ENCODE measurements at regions of chr6 and their contacts with region 1.

Region 1: GRCh38 chr6:139375232-139376016 is 976 bp upstream of the CITED2 start:
- DNase-seq: peak; percentile 98
- H3K4me3 ChIP-seq: peak overlapping the region; percentile 65 to 89 (median 86)
- H3K27ac ChIP-seq: peak overlapping the region; percentile 96 to 97 (median 97)
- H3K4me1 ChIP-seq: peaks cover 4 to 26% (median 12%) of the 10 kb centered on the region in 4 donors
- H3K27me3 ChIP-seq: no peaks in the 10 kb centered on the region
- CTCF ChIP-seq: no peak
- EP300 ChIP-seq: peak in 3 of 4 donors; percentile 48 to 82 (median 66)
- POLR2A ChIP-seq: peak in 1 of 2 donors; percentile 49

Region 2: DNA sequence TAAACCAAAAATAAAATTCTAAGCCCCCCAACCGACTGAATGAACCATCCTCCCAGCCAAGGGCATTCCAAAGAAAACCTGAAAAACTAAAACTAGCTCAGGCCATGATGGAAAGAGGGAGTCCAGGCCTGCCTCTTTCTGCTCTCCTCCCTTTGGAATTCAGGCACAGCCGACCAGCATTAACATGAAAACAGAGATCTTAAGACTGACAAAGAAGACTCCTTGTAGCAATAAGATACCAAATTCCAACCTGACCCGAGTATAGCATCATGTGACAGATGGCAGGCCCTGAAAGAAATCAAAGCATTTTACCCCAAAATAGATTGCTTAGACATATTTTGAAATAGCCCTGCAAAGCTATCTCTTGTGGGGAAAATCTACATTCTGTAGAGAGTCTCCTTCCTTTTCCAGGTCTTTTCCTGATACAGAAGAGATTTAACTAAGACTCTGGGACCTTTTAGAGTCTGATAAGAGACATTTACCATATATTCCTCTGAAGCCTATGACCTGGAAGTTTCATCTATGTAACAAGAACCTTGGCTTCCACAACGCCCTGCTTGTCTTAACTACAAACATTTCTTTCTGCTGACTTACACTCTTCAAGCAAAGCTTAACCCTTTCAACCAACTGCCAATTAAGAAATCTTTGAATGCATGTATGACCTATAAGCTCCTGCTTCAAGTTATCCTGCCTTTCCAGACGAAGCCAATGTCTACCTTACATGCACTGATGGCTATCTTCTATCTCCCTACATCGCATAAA is 61.5 kb before region 1 on chr6:
- intact Hi-C with region 1: no loop called
- DNase-seq: no peak
- H3K4me3 ChIP-seq: no peak overlapping the region
- H3K27ac ChIP-seq: no peak overlapping the region
- H3K4me1 ChIP-seq: no peaks in the 10 kb centered on the region
- H3K27me3 ChIP-seq: no peaks in the 10 kb centered on the region
- CTCF ChIP-seq: no peak
- EP300 ChIP-seq: no peak
- POLR2A ChIP-seq: no peak

Region 3: GRCh38 chr6:139588076-139588639 is 212.7 kb after region 1 on chr6:
- intact Hi-C with region 1: loop called (anchors 2 kb)
- DNase-seq: no peak
- H3K4me3 ChIP-seq: no peak overlapping the region
- H3K27ac ChIP-seq: peak overlapping the region; percentile 69 to 82 (median 77)
- H3K4me1 ChIP-seq: peaks cover 0 to 58% (median 55%) of the 10 kb centered on the region in 4 donors
- H3K27me3 ChIP-seq: no peaks in the 10 kb centered on the region
- CTCF ChIP-seq: no peak
- EP300 ChIP-seq: no peak
- POLR2A ChIP-seq: no peak

Region 4: GRCh38 chr6:139764498-139764986 is 389.1 kb after region 1 on chr6:
- intact Hi-C with region 1: loop called (anchors 5 kb)
- DNase-seq: no peak
- H3K4me3 ChIP-seq: no peak overlapping the region
- H3K27ac ChIP-seq: peak overlapping the region; percentile 71 to 89 (median 84)
- H3K4me1 ChIP-seq: peaks cover 0 to 35% (median 23%) of the 10 kb centered on the region in 4 donors
- H3K27me3 ChIP-seq: no peaks in the 10 kb centered on the region
- CTCF ChIP-seq: no peak
- EP300 ChIP-seq: peak in 2 of 4 donors; percentile 2 to 48
- POLR2A ChIP-seq: no peak

Region 5: GRCh38 chr6:139881728-139882211 is 506.3 kb after region 1 on chr6:
- intact Hi-C with region 1: loop called (anchors 10 kb)
- DNase-seq: no peak
- H3K4me3 ChIP-seq: no peak overlapping the region
- H3K27ac ChIP-seq: peak overlapping the region in 3 of 4 donors; percentile 33 to 72 (median 53)
- H3K4me1 ChIP-seq: peaks cover 0 to 21% (median 17%) of the 10 kb centered on the region in 4 donors
- H3K27me3 ChIP-seq: no peaks in the 10 kb centered on the region
- CTCF ChIP-seq: peak in 3 of 4 experiments; percentile 19 to 42 (median 31)
- EP300 ChIP-seq: no peak
- POLR2A ChIP-seq: no peak

Region 6: GRCh38 chr6:140203661-140204147 is 828.3 kb after region 1 on chr6:
- intact Hi-C with region 1: loop called (anchors 10 kb)
- DNase-seq: no peak
- H3K4me3 ChIP-seq: no peak overlapping the region
- H3K27ac ChIP-seq: peak overlapping the region in 3 of 4 donors; percentile 8 to 39 (median 11)
- H3K4me1 ChIP-seq: peaks cover 0 to 26% (median 16%) of the 10 kb centered on the region in 4 donors
- H3K27me3 ChIP-seq: no peaks in the 10 kb centered on the region
- CTCF ChIP-seq: no peak
- EP300 ChIP-seq: no peak
- POLR2A ChIP-seq: no peak

Measured in sigmoid colon (tissue), 7 donors.